ENCODE measurements at regions of chr12 and their contacts with region 1.

Region 1: DNA sequence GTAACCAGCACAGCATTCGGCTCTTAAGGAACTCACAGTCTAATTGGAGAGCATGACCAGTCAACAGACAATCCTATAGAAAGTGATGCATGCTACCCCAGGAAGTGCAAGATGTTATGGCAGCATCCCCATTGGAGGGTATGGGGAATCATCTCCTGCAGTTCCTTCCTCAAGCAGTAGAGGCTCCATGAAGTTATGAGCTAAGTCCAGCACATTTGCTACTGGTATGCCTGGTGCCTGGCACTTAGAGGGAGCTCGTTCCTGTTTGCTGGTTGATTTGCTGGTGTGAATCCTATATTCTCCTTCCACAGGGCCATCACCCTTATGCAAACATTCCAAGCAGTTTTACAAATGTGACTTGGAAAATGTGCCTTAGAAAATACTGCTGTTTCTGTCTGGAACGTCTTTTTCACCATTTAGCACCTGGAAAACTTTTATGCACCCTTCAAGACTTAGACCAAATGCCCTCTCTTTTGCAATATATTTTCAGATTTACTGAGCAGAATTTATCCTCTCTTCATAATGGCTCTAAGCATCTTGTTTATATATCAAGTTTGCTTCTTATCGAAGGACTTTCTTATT is 136.1 kb upstream of the WSCD2 start:
- ATAC-seq: peak in 6 of 8 experiments; percentile 59 to 90 (median 78)
- H3K4me3 ChIP-seq: no peak overlapping the region
- H3K27ac ChIP-seq: no peak overlapping the region
- H3K4me1 ChIP-seq: peaks cover 5 to 10% of the 10 kb centered on the region in 2 donors

Region 2: DNA sequence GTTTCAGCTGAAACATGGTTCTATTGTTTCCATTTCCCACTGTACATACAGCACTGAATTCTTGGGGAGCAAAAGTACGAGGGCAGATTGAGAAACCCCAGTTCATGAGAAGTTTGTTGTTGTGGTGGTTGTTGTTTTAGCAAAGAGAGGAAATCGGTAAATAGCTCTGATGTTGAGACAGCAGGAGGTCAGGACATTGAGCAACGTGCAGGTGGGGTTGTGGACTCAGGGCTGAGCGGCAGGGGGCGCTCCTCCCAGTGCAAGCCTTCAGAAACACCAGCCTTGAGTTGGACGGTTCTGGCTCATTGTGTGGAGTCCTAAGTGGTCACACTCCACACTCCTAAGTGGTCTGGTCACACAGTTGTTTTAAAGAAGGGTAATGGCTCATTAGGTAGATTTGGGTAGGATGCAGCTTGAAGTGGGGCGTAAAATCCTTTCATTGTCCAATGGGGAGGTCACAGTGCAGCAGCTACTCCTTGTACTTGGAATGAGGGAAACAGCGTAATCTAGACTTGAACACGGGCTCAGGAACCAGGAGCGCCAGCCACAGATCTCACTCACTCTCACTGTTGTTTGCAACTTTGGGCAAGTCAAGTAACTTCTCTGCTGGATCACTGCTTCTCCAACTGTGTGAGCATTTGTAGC is 321.8 kb before region 1 on chr12:
- in situ Hi-C with region 1: no loop called
- ATAC-seq: peak in 3 of 8 experiments; percentile 54 to 68 (median 57)
- H3K4me3 ChIP-seq: no peak overlapping the region
- H3K27ac ChIP-seq: no peak overlapping the region
- H3K4me1 ChIP-seq: no peaks in the 10 kb centered on the region

Region 3: DNA sequence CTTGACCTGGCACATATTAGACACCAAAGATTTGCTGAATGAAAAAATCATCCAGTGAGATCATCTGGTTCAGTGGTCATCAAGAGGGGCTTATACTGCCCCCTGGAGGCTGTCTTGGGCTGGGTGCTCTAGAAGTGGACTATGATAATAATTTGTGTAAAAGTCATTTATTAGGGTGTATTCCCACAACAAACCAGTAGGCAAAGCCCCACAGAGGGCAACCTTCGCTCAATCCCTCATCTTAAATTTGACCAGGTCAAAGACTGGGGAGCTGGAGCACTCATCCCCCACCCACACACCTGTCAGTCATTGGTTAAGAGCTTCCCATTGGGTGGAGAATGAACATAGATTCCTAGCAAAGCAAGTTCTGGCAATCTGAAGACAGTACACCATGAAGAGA is 502.1 kb after region 1 on chr12:
- in situ Hi-C with region 1: loop called in 1 of 9 experiments (anchors 25 kb)
- ATAC-seq: peak in 3 of 8 experiments; percentile 21 to 57 (median 38)
- H3K4me3 ChIP-seq: no peak overlapping the region
- H3K27ac ChIP-seq: no peak overlapping the region
- H3K4me1 ChIP-seq: no peaks in the 10 kb centered on the region